ENCODE measurements at regions of chr1 and their contacts with region 1.

Region 1: GRCh38 chr1:150995896-150996295 is 10.8 kb downstream of the MINDY1 start:
- DNase-seq: no peak
- H3K4me3 ChIP-seq: no peak overlapping the region
- H3K27ac ChIP-seq: no peak overlapping the region
- H3K4me1 ChIP-seq: no peaks in the 10 kb centered on the region
- H3K27me3 ChIP-seq: no peaks in the 10 kb centered on the region
- CTCF ChIP-seq: peak; percentile 42 to 59

Region 2: DNA sequence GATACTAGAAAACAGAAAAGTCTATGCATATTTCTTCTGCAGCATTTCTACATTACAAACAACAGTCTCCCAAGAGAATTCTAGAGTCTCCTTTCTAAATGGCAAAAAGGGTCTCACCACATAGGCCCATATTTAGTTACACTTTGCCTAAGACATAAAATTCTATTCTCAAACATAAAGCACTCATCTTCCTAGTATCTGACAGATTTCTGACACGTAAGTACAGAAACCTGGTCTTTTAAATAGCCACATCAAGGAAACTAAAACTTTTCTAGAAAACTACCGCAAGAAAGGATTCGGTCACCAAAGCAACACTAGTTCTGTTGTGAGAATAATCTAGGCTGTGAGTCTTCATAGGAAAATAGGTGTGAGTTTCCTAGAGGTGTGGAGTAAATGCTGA is 154.3 kb before region 1 on chr1:
- CTCF ChIA-PET with region 1: no interaction called
- dilution Hi-C with region 1: no loop called
- in situ Hi-C with region 1: no loop called
- intact Hi-C with region 1: no loop called
- DNase-seq: no peak
- H3K4me3 ChIP-seq: no peak overlapping the region
- H3K27ac ChIP-seq: no peak overlapping the region
- H3K4me1 ChIP-seq: no peaks in the 10 kb centered on the region
- H3K27me3 ChIP-seq: no peaks in the 10 kb centered on the region
- CTCF ChIP-seq: no peak

Region 3: DNA sequence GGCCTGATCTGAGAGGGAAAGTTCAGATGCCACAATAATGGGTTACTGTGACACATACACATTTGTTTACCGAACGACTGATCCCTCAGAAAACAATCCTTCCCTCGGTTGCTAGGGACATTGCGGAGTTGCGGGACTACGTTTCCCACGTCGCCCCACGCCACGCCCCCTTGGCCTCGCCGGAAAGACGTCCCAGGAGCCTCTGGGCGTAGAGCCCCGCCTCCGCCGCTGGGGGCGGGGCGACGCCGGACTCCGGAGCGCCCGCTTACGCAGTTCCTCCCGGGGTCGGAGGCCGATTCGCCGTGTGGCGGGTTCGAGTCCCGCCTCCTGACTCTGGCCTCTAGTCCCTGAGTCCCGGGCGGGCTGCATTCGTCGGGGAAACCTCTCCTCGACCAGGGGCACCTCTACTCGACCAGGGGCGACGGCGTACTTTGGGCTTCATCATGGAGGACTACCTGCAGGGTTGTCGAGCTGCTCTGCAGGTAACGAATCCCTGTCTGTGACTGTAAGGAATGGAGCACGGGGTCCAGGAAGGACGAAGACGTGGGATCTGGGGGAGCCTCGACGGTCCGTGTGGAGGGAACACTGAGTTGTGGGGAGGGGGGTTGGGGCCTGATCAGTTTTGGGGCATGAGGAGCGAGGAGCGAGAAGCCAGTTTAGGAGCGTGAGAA is 12.4 kb after region 1 on chr1 and contains the start of gene PRUNE1:
- CTCF ChIA-PET with region 1: no interaction called
- dilution Hi-C with region 1: no loop called
- in situ Hi-C with region 1: no loop called
- intact Hi-C with region 1: loop called (anchors 1 kb)
- DNase-seq: peak; percentile 93
- H3K4me3 ChIP-seq: peak within 1 kb of the TSS; percentile 78 to 93 (median 80)
- H3K27ac ChIP-seq: peak within 1 kb of the TSS; percentile 97
- H3K4me1 ChIP-seq: peaks cover 47% of the 10 kb centered on the region
- H3K27me3 ChIP-seq: no peaks in the 10 kb centered on the region
- CTCF ChIP-seq: no peak
- total RNA-seq, gene PRUNE1: 9.4 to 16.3 TPM

Region 4: DNA sequence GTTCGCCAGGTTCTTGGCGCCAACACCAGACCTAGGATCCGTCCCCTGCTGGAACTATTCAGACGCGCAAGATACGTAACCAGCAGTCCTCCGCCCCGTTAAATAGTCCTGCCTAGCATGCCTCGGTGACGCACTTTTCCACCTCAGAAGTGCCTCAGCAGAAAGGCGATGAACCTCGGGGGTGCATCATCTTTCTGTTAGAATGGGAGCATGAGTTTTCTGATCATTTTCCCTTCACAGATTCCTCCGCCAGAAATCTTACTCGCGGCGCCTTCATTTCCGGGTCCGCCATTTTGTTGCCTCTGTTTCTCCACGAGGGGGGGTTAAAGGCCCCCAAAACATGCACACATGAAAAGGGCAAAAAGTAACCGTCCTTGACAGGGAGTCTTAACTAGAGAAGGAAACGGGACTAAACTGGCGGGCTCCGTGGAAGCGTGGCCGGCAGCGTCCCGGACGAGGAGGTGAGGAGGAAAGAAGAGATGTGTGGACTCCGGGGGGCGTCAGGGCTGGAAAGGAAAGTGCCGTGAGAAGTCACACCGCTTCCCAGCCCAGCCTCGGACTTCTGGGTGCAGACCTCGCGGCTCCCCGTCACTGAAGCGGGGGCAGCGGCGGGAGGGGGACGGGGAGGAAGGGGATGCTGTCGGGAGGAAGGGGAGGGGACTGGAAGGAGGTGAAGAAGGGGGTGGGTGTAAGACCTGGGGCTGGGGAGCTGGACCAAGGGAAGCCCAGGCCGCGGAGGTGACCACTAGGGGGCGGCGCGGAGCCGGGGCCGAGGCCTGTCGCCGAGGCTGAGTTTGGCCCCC is 74.8 kb after region 1 on chr1 and contains the start of gene GABPB2:
- CTCF ChIA-PET with region 1: no interaction called
- dilution Hi-C with region 1: no loop called
- in situ Hi-C with region 1: no loop called
- intact Hi-C with region 1: no loop called
- DNase-seq: peak; percentile 93
- H3K4me3 ChIP-seq: peak within 1 kb of the TSS; percentile 76 to 95 (median 84)
- H3K27ac ChIP-seq: peak within 1 kb of the TSS; percentile 91
- H3K4me1 ChIP-seq: peaks cover 12% of the 10 kb centered on the region
- H3K27me3 ChIP-seq: no peaks in the 10 kb centered on the region
- CTCF ChIP-seq: peak; percentile 62 to 94
- total RNA-seq, gene GABPB2: 9.2 to 10.7 TPM